Astrocyte of the spinal cord (primary cell): ENCODE measurements at regions of chr6 and their contacts with region 1.

Region 1: DNA sequence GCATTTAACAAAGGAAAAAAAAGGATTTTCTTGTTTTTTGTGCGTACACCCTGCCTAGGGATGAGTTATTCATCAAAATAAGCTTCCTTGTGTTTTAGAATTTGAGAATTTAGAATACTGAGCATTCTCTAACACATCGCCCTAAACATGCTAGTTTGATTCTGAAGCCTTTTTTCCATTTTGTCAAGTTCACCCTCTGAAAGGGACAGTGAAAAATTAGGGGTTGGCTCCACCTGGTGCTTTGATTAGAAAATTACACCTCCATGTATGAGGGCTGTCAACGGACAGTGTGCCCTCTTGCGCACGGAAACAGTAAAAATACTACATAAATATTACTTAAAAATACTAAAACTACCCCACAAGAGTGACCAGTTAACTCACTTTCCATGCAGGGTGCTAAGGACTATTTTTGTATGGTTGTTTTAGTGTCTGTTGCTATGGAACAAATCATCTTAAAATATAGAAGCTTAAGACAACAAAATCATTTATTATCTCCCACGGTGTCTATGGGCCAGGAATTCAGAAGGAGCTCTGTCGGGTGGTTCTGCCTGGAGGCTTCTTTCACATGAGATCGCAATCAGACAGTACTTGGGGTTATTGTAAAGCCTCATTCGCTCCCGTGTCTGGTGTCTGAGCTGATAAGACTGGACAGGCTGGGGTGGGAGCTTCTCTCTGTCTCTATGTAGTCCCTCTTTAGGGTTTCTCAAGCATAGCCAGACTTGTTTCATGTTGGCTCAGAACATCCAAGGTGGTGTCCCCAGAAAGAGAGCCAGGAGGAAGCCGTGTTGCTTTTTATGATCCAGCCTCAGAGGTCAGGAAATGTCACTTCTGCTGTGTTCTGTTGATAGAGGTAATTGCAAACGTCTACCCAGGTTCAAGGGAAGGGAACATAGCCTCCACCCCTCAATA is 41.1 kb upstream of the TMEM170B start:
- DNase-seq: peak; percentile 89
- H3K4me3 ChIP-seq: no peak overlapping the region
- CTCF ChIP-seq: peak; percentile 77

Region 2: GRCh38 chr6:10954590-10955010 is 541.8 kb before region 1 on chr6:
- in situ Hi-C with region 1: loop called (anchors 25 kb)
- DNase-seq: peak; percentile 77
- H3K4me3 ChIP-seq: no peak overlapping the region
- CTCF ChIP-seq: peak; percentile 95

Region 3: DNA sequence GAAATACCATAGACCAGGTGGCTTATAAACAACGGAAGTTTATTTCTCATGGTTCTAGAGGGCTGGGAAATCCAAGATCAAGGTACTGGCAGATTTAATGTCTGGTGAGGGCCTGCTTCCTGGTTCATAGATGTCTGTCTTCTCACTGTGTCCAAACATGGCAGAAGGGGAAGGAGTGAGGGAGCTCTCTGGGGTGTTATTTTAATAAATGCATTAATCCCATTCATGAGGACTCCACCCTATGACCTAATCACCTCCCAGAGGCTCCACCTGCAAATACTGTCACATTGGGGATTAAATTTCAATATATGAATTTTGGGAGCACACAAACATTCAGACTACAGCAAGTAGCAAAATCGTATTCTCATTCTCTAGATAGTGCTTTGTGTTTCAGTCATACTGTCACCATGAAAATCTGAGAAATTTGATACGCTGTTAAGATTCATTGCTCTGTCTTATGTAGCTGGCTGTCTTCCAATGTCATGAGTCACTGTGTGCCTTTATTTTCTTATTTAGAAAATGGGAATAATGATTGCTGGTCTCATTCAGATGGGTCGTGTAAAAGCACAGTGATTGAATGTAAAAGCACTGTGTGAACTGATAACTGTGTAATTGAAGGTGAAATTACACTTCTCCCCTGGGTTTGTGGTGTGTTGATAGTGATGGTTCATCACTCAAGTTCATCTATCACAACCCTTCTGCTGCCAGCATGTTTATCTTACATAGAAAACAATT is 376.0 kb before region 1 on chr6:
- in situ Hi-C with region 1: no loop called
- DNase-seq: peak; percentile 62
- H3K4me3 ChIP-seq: no peak overlapping the region
- CTCF ChIP-seq: no peak

Region 4: GRCh38 chr6:12008366-12009179 is 512.2 kb after region 1 on chr6:
- in situ Hi-C with region 1: no loop called
- DNase-seq: peak; percentile 72
- H3K4me3 ChIP-seq: peak overlapping the region; percentile 76
- CTCF ChIP-seq: no peak